ENCODE measurements at regions of chr5 and their contacts with region 1.

Region 1: DNA sequence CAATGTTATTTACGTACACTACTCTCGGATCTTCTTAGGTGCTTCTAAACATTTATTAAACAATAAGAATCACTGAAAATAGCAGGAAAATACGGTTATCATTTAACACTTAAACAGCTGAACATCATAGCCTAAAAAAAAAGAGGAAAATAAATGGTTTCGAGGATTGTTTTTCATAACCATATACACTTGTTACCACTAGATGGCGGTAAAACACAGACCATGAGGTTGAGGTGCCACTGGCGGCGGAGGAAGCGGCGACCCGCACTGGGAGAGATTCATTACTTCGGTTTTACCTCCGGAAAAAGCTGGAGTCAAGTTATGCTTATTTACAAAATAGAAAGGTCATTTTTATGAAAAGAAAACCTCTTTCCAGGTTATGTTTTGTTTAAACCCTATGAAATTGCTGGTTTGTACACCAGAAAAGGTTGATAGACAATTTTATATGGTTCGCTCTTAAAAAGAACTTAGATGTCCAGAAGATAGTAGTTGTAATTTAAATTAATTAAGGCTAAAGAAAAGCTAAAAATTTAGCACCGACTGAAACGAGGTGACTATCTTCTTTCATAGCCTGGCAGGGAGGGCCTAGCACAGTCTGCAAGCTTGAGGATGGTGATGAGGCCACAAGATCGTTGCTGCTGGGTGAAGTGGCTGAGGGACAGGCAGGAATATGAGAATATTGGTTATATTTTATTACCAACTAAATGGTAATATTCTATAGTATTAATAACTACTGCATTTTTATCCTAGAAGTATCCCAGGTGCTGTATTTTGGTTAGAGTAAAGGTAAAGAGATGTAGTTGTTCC is 605.7 kb downstream of the RAB3C start:
- DNase-seq: peak; percentile 67 to 81
- ATAC-seq: peak; percentile 56 to 70 (median 64)
- H3K4me3 ChIP-seq: peak overlapping the region; percentile 47
- H3K27ac ChIP-seq: peak overlapping the region; percentile 85
- H3K4me1 ChIP-seq: peaks cover 74% of the 10 kb centered on the region
- H3K27me3 ChIP-seq: no peaks in the 10 kb centered on the region
- CTCF ChIP-seq: peak; percentile 86

Region 2: DNA sequence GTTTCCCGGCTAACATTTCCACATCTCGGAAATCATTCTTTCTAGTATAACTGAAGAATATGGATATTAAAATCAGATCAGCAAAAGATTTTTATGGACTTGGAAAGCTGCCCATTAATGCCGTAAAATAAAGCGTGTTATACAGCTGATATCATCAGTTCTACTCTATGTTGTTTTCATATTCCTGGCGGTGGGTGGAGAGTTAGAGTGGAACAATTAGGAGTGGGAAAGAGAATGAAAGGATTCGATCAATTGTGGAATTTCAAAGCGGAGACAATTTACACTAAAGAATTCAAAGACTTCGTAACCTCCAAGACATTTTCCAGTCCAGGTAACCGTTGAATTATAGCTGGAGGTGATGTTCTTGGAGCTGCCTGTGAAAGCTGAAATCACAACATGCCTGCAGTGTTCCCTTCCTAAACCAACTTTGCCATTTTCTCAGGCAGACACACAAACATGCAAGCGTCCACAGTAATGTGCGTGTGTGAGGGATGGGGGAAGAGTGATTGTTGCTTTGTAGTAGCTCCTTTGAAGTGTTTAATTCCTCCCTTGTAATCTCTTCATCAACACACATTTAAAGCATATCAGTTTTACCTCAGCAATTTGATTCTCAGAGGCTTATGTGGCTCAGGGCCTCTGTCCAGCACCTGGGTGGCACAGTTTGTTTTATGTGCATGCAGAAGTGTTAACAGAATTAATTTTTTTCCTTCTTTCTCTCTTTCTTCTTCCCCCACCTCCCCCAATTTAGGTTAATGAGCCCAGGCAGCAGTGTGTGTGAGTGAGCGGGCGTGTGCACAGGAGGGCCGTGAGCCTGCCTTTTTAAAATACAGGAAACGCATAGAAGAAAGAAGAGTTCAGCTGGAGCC is 61.7 kb before region 1 on chr5:
- intact Hi-C with region 1: no loop called
- DNase-seq: no peak
- ATAC-seq: peak; percentile 10 to 40 (median 28)
- H3K4me3 ChIP-seq: peak overlapping the region; percentile 56
- H3K27ac ChIP-seq: peak overlapping the region; percentile 84
- H3K4me1 ChIP-seq: peaks cover 68% of the 10 kb centered on the region
- H3K27me3 ChIP-seq: no peaks in the 10 kb centered on the region
- CTCF ChIP-seq: no peak

Region 3: GRCh38 chr5:59143926-59144333 is 44.7 kb before region 1 on chr5:
- intact Hi-C with region 1: no loop called
- DNase-seq: no peak
- ATAC-seq: peak; percentile 29 to 51 (median 48)
- H3K4me3 ChIP-seq: no peak overlapping the region
- H3K27ac ChIP-seq: peak overlapping the region; percentile 83
- H3K4me1 ChIP-seq: peaks cover 44% of the 10 kb centered on the region
- H3K27me3 ChIP-seq: no peaks in the 10 kb centered on the region
- CTCF ChIP-seq: no peak

Region 4: DNA sequence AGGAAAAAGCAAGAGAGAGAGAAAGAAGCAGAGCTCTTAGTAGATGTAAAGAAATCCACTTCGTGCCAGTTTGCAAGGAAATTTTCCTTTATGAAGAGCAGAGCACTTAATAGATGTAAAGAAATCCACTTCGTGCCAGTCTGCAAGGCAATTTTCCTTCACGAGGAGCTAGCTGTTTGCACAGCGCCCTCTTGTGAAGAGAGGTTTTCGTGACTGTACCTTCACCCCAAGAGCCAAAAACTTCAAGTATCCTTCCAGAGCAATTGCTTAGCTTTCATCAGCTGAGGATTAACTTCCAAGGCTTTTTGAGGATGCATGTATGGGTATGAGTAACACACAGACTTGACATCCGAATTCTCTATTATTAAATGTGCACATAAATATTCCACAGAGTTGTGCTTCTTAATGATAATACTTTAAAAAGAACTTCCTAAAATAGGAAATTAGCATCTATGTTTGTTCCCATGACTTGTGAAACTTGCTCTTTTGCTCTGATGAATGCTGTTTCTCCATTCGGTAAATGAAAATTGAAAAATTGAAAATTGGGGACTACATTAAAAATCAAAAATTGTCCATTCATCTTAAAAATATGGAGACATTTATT is 179.3 kb after region 1 on chr5:
- intact Hi-C with region 1: loop called (anchors 5 kb)
- DNase-seq: peak; percentile 35 to 54
- ATAC-seq: peak; percentile 60 to 77 (median 66)
- H3K4me3 ChIP-seq: no peak overlapping the region
- H3K27ac ChIP-seq: peak overlapping the region; percentile 95
- H3K4me1 ChIP-seq: peaks cover 45% of the 10 kb centered on the region
- H3K27me3 ChIP-seq: no peaks in the 10 kb centered on the region
- CTCF ChIP-seq: peak; percentile 82

Region 5: DNA sequence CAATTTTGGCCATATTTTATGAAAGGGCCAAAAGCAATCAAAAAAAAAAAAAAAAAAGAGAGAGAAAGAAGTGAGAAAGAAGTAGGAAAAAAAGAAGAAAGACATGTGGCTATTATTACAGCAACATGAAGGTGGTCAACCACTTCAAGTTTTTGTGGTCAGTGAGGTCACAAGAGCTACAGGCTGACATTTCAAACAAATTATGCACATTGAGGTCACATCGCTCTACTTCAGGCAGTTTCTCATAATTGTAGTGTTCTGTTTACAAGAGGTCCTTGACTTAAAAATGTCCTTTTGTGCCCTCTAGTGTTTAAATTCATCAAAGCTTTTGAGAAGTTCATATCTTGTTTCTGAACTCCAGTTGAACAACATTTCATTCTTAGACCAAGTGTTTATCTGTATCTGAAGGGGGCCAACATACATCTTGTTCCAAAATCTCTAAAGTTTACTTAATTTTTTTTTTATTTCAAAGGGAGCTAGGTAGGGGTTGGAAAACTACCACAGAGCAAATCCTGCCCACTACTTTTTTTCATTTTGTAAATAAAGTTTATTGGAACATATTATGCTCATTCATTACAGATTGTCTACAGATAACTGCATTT is 191.8 kb after region 1 on chr5:
- intact Hi-C with region 1: loop called in 1 of 2 experiments (anchors 5 kb)
- DNase-seq: no peak
- ATAC-seq: peak; percentile 42 to 67 (median 59)
- H3K4me3 ChIP-seq: no peak overlapping the region
- H3K27ac ChIP-seq: peak overlapping the region; percentile 13
- H3K4me1 ChIP-seq: no peaks in the 10 kb centered on the region
- H3K27me3 ChIP-seq: no peaks in the 10 kb centered on the region
- CTCF ChIP-seq: peak; percentile 50

Region 6: DNA sequence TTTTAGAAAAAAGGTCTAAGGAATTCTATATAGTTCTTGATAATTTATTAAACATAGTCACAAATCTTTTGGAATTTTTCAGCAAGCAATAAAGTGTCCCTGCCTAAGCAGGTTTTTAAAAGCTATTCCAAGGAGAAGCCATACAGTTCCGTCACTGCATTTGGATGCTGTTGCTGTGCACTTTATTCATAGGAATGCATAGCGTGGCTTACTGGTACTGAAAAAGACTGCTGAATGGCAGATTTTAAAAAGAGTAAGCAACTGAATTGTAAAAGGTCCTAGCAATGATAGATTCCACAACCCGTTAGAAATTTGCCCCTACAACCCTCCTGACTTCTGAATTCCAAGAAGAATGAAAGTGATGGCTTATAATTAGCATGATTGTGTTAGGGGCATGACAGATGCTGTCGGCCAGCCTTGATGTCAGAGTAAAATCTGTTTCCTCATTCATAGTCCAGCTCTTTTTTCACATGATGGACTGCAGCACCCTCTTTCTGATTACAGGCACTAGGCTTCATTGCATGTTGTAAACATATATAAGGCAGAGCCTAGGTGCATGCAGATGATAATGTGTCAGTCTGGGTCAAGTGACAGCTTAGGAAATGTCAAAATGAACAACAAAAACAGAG is 477.9 kb after region 1 on chr5:
- intact Hi-C with region 1: loop called (anchors 5 to 10 kb)
- DNase-seq: no peak
- ATAC-seq: peak; percentile 44 to 80 (median 73)
- H3K4me3 ChIP-seq: no peak overlapping the region
- H3K27ac ChIP-seq: peak overlapping the region; percentile 5
- H3K4me1 ChIP-seq: peaks cover 30% of the 10 kb centered on the region
- H3K27me3 ChIP-seq: no peaks in the 10 kb centered on the region
- CTCF ChIP-seq: peak; percentile 32

Measured in psoas muscle (tissue), 8 donors.